ENCODE measurements at regions of chr9 and their contacts with region 1.

Region 1: DNA sequence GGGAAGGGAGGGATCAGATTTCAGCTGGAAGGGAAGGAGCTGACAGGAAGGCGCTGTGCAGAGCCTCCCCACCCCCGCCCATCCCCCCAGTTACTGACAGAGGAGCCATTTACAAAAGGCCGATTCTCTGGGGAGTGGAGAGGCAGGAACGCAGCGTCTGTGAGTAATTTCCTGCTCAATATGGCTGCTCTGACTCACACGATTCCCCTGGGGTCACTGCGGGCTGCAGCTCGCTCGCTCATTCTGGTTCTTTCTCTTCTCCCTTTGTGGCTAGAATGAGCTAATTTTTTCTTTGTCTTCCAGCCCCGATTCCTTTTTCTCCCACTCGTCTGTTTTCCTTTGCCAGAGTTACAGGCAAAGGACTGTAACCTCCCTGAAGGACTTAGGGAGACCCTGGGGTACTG is 28.8 kb downstream of the PTPA start:
- DNase-seq: peak; percentile 61 to 94 (median 74)
- ATAC-seq: peak; percentile 86
- H3K4me3 ChIP-seq: peak overlapping the region; percentile 27
- H3K27ac ChIP-seq: peak overlapping the region; percentile 93
- H3K4me1 ChIP-seq: peaks cover 30 to 49% of the 10 kb centered on the region in 2 experiments
- H3K27me3 ChIP-seq: no peaks in the 10 kb centered on the region
- CTCF ChIP-seq: no peak
- EP300 ChIP-seq: peak; percentile 67
- POLR2A ChIP-seq: peak; percentile 55
- RAD21 ChIP-seq: no peak

Region 2: GRCh38 chr9:128927731-128928411 is 212.1 kb before region 1 on chr9:
- CTCF ChIA-PET with region 1: no interaction called
- POLR2A ChIA-PET with region 1: no interaction called
- in situ Hi-C with region 1: no loop called
- intact Hi-C with region 1: no loop called
- DNase-seq: peak; percentile 72 to 75 (median 75)
- ATAC-seq: peak; percentile 86
- H3K4me3 ChIP-seq: no peak overlapping the region
- H3K27ac ChIP-seq: no peak overlapping the region
- H3K4me1 ChIP-seq: peaks cover 4 to 13% of the 10 kb centered on the region in 2 experiments; a peak in 4 of 5 replicates
- H3K27me3 ChIP-seq: no peaks in the 10 kb centered on the region; a peak in 1 of 5 replicates
- CTCF ChIP-seq: peak; percentile 91 to 93 (median 92)
- EP300 ChIP-seq: no peak
- POLR2A ChIP-seq: no peak
- RAD21 ChIP-seq: peak; percentile 89 to 95

Region 3: DNA sequence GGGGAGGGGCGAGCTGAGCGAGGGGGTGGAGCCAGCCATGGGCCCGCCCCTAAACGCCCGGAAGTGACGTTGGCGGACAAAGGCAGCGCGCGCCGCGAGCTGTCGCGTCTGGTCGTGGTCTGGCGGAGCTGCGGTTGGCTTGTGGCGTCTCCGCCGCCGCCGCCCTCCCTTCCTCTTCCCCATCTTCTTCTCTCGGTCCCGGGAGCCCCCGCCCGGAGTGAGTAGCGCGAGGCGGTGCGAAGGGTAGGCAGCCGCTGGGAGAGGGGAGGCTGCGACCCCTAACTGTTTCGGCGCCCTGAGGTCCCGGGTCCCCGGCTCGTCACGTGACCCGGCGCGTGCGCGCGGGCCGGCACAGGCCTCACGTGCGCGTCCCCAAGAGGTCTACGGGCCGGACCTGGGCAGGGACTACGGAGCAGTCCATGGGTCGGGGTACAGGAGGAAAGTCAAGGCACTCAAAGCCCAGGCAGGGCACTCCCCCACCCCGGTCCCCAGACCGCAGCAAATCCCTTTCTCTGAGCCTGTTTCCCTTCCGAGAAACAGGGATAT is 486.2 kb after region 1 on chr9 and contains the start of gene NTMT1:
- CTCF ChIA-PET with region 1: no interaction called
- POLR2A ChIA-PET with region 1: interaction called, 18 read pairs
- in situ Hi-C with region 1: no loop called
- intact Hi-C with region 1: loop called (anchors 1 kb)
- DNase-seq: peak; percentile 89 to 93 (median 92)
- ATAC-seq: peak; percentile 83
- H3K4me3 ChIP-seq: peak within 1 kb of the TSS; percentile 67
- H3K27ac ChIP-seq: peak within 1 kb of the TSS; percentile 87
- H3K4me1 ChIP-seq: peaks cover 36 to 50% of the 10 kb centered on the region in 2 experiments
- H3K27me3 ChIP-seq: no peaks in the 10 kb centered on the region
- CTCF ChIP-seq: no peak
- EP300 ChIP-seq: 0 out of 2 replicates have a peak, but pooled peaks have one; percentile 8
- POLR2A ChIP-seq: peak; percentile 98
- RAD21 ChIP-seq: no peak
- polyA plus RNA-seq, gene NTMT1: 42.1 to 67.0 TPM

Region 4: DNA sequence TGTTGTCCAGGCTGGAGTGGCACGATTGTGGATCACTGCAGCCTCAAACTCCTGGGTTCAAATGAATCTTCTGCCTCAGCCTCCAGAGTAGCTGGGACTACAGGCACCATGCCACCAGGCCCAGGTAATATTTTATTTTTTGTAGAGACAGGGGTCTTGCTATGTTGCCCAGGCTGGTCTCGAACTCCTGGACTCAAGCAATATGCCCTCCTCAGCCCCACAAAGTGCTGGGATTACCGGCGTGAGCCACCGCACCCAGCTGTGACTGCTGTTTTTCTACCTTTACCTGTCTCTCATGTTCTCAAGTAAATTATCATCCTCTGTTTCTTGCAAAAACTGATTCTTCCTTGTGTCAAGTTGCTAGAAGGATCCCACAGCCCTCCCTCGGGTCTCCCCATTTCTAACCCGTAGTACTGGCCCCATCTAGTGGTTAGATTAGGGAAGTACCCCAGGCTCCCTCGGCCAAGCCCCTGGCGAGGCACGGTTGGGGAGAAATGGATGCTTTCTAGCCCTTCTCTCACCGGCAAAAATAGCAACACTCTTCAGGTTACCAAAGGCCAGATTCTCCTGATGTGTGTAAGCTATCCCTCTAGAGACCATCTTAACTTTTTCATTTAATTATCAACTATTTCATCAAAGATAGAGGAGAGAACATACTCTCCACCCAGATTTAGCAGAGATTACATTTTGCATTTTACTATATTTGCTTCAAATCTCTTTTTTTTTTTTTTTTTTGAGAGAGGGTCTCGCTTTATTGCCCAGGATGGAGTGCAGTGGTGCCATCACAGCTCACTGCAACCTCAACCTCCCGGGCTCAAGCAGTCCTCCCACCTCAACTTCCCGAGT is 643.7 kb after region 1 on chr9:
- CTCF ChIA-PET with region 1: no interaction called
- POLR2A ChIA-PET with region 1: no interaction called
- in situ Hi-C with region 1: no loop called
- intact Hi-C with region 1: loop called (anchors 10 kb)
- DNase-seq: peak; percentile 89 to 97 (median 96)
- ATAC-seq: peak; percentile 97
- H3K4me3 ChIP-seq: no peak overlapping the region
- H3K27ac ChIP-seq: no peak overlapping the region
- H3K4me1 ChIP-seq: peaks cover 8 to 15% of the 10 kb centered on the region in 2 experiments; a peak in 3 of 5 replicates
- H3K27me3 ChIP-seq: no peaks in the 10 kb centered on the region; a peak in 1 of 5 replicates
- CTCF ChIP-seq: peak; percentile 97 to 99 (median 99)
- EP300 ChIP-seq: no peak; the same call in 1 of the 2 replicates
- POLR2A ChIP-seq: no peak
- RAD21 ChIP-seq: peak; percentile 100

Measured in K562 (cell line).